ENCODE measurements at regions of chr11 and their contacts with region 1.

Region 1: DNA sequence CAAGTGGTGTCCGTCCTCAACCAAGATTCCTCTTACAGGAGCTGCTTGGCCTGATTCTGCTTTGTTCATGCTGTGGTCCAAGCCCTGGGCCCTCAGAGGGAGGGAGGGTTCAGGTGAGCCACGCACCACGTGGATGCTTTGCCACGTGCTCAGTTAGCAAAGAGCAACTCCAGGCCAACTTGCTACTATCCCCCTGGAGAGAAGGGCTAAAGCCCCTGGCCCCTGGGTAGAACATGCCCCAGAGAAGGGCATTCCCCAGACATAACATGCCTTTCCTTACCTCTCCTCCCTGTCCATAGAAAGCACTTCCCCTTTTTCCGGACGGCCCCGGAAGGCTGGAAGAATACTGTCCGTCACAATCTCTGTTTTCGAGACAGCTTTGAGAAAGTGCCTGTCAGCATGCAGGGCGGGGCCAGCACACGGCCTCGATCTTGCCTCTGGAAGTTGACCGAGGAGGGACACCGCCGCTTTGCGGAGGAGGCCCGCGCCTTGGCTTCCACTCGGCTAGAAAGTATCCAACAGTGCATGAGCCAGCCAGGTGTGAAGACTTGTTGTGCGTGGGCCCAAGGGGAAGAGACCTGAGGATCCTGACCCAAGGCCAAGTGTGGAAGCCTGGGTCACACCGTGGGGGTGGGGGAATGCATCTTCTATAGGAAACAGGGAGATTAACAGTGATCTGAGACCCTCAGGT is 8.8 kb downstream of the FOXR1 start:
- DNase-seq: no peak
- H3K4me3 ChIP-seq: no peak overlapping the region
- H3K27ac ChIP-seq: no peak overlapping the region
- H3K4me1 ChIP-seq: no peaks in the 10 kb centered on the region
- H3K27me3 ChIP-seq: no peaks in the 10 kb centered on the region
- CTCF ChIP-seq: no peak

Region 2: GRCh38 chr11:118735203-118735602 is 245.1 kb before region 1 on chr11:
- CTCF ChIA-PET with region 1: no interaction called
- POLR2A ChIA-PET with region 1: interaction called, 29 read pairs
- intact Hi-C with region 1: no loop called
- DNase-seq: peak in 1 of 2 experiments; percentile 52
- H3K4me3 ChIP-seq: no peak overlapping the region
- H3K27ac ChIP-seq: no peak overlapping the region
- H3K4me1 ChIP-seq: peaks cover 14% of the 10 kb centered on the region
- H3K27me3 ChIP-seq: no peaks in the 10 kb centered on the region
- CTCF ChIP-seq: no peak

Region 3: GRCh38 chr11:118997627-118998387 is 17.5 kb after region 1 on chr11 and contains the start of gene CENATAC:
- CTCF ChIA-PET with region 1: interaction called, 3 read pairs
- POLR2A ChIA-PET with region 1: interaction called, 10 read pairs
- intact Hi-C with region 1: no loop called
- DNase-seq: peak; percentile 82 to 89
- H3K4me3 ChIP-seq: peak within 1 kb of the TSS; percentile 86
- H3K27ac ChIP-seq: peak within 1 kb of the TSS; percentile 74
- H3K4me1 ChIP-seq: peaks cover 33% of the 10 kb centered on the region
- H3K27me3 ChIP-seq: no peaks in the 10 kb centered on the region
- CTCF ChIP-seq: no peak
- total RNA-seq, gene CENATAC: 61.7 and 73.9 TPM in 2 replicates

Region 4: DNA sequence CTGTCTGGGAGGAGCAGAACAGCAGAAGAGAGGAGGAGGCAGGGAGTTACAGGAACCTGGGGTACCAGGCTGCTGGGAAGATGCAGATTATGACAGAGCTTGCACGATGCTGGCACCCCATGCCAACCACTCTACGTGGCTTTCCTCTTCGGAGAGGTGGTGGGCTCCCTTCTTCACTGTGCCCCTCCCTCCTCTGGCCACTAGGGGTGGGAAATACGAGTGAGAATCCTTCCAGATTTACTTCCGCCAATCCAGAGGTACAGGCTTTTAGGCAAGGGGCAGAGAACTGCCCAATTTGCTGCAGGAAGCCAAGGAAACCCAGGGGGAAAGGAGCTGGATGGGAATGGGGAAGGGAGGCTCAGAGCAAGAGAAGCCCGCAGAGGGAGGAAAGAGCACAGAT is 64.4 kb after region 1 on chr11:
- CTCF ChIA-PET with region 1: no interaction called
- POLR2A ChIA-PET with region 1: no interaction called
- intact Hi-C with region 1: no loop called
- DNase-seq: peak in 1 of 2 experiments; percentile 21
- H3K4me3 ChIP-seq: no peak overlapping the region
- H3K27ac ChIP-seq: no peak overlapping the region
- H3K4me1 ChIP-seq: no peaks in the 10 kb centered on the region
- H3K27me3 ChIP-seq: no peaks in the 10 kb centered on the region
- CTCF ChIP-seq: peak; percentile 47

Region 5: DNA sequence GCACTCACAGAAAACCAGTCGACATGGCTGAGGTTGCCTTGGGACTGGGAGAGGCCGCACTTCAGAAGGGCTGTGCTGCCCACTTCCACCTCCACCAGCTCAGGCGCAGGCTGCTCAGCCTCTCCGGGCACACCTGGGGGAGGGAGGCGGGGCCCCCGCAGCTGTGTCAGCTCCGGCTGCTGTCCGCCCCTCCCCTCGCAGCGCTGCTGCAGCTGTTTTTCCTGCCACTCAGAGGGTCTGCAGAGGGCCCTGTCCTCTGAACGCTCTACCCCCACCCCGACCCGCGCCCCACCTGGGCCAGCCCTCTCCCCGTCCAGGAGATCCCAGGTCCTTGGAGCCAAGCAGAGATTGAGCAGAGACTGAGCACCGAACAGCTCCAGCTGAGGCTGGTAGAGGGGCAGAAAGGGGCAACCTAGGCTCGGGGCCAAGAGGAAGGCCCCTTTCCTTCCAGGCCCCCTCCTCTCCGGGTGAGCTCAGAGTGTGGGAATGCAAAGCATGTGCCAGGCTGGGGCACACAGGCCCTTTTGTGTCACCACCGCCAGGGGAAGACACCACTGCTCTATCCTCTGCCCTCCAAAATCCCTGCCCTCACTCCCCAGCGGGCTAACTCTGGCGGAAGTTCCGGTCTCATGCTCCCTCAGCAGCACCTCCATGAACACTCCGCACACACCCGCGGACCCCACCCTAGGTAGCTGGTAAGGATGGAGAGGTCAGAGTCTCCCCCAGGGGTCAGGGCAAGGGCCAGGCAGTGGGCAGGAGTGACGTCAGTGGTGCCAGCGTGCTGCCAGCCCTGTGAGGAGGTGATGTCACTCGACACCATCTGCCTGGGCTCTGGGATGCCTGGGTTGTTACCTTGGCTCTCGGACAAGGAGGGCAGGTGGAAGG is 335.0 kb after region 1 on chr11:
- CTCF ChIA-PET with region 1: no interaction called
- POLR2A ChIA-PET with region 1: interaction called, 14 read pairs
- intact Hi-C with region 1: no loop called
- DNase-seq: peak; percentile 65 to 71
- H3K4me3 ChIP-seq: peak overlapping the region; percentile 67
- H3K27ac ChIP-seq: no peak overlapping the region
- H3K4me1 ChIP-seq: peaks cover 31% of the 10 kb centered on the region
- H3K27me3 ChIP-seq: peaks cover 20% of the 10 kb centered on the region
- CTCF ChIP-seq: peak; percentile 34; the same call in 1 of the 2 replicates

Measured in PC-9 (cell line).